PC-9 (cell line): ENCODE measurements at regions of chr20 and their contacts with region 1.

Region 1: GRCh38 chr20:41136680-41137613 is at the start of gene PLCG1:
- DNase-seq: peak; percentile 62 to 92
- H3K4me3 ChIP-seq: peak within 1 kb of the TSS; percentile 94
- H3K27ac ChIP-seq: no peak within 1 kb of the TSS
- H3K4me1 ChIP-seq: peaks cover 15% of the 10 kb centered on the region
- H3K27me3 ChIP-seq: no peaks in the 10 kb centered on the region
- CTCF ChIP-seq: no peak
- total RNA-seq, gene PLCG1: 64.1 and 69.4 TPM in 2 replicates

Region 2: DNA sequence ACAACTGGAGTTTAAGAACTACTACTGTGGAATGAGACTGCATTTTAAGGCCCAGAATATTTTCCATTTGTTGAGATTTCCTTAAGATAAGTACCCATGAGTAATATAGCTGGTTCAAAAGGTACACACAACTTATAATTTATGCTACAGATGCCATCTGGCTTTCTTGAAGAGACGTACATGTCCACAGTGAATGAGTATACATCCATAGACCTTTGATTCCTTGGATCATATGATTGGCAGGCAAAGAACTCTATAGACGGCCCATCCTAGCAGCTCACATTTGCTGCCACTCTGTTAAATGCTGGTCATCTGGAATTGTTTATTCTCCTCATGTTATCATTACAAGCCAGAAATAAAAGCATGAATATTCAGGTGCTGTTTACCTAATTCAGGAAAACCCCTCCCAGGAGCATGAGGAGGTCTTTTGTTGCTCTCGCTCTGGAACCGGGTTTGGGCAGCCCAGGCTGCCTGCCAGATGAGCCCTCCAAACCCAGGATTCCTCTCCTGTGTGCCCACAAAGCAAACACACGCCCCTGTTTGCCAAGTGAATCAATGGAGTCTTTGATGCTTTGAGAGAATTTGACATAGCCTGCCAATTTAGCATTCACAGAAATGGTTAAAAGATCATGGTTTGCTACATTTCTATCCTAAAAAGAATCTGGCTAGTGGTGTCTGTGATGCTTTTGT is 17.3 kb before region 1 on chr20:
- CTCF ChIA-PET with region 1: no interaction called
- POLR2A ChIA-PET with region 1: no interaction called
- intact Hi-C with region 1: no loop called
- DNase-seq: no peak
- H3K4me3 ChIP-seq: no peak overlapping the region
- H3K27ac ChIP-seq: no peak overlapping the region
- H3K4me1 ChIP-seq: no peaks in the 10 kb centered on the region
- H3K27me3 ChIP-seq: no peaks in the 10 kb centered on the region
- CTCF ChIP-seq: no peak

Region 3: DNA sequence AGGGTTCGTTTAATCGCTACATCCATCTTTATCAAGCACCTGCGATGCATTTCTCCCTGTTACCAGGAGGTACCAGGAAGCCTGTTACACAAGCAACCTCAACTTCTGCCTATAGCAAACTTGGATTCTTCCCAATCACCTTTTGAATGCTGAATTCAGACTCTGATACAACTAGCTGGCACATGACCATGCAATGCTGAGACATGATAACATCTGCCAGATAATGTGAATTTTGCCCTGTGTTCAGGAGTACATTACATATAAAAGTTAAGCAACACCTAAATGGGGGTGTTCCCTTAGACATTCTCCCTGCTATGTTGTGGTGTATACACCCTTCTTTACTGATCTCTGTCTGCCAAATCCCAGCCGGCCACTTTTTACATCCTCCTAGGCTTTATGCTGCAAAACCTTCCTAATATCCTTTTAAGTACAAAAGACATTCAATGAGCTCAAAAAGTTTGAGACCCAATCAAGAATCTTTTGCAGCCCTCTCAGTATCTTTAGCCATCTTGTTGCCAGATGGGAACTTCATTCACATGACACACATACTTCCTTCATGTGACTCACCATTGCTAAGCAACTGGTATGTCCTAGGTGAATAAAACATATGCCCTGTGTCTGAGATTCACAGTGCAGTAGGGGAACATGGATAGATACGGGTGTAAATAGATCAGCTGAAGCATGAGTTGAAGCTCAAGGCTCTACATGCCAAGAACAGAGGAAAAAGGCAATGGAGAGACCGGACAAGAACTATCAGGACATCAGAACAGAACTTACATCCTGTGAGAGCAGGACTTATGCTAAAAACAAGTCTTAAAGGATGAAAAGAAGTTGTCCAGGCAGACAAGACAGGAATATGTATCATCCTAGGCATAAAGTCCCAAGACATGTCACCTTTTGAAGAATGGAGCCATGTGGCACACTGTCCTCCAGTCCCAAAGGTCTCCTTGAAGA is 96.3 kb after region 1 on chr20:
- CTCF ChIA-PET with region 1: interaction called, 4 read pairs
- POLR2A ChIA-PET with region 1: no interaction called
- intact Hi-C with region 1: loop called (anchors 1 kb)
- DNase-seq: peak in 1 of 2 experiments; percentile 45
- H3K4me3 ChIP-seq: peak overlapping the region; percentile 45; the same call in 1 of the 2 replicates
- H3K27ac ChIP-seq: no peak overlapping the region
- H3K4me1 ChIP-seq: peaks cover 11% of the 10 kb centered on the region
- H3K27me3 ChIP-seq: no peaks in the 10 kb centered on the region
- CTCF ChIP-seq: no peak

Region 4: GRCh38 chr20:41783423-41784208 is 646.7 kb after region 1 on chr20:
- CTCF ChIA-PET with region 1: no interaction called
- POLR2A ChIA-PET with region 1: no interaction called
- intact Hi-C with region 1: no loop called
- DNase-seq: no peak
- H3K4me3 ChIP-seq: no peak overlapping the region
- H3K27ac ChIP-seq: no peak overlapping the region
- H3K4me1 ChIP-seq: no peaks in the 10 kb centered on the region
- H3K27me3 ChIP-seq: peaks cover 8% of the 10 kb centered on the region
- CTCF ChIP-seq: no peak